GM12878 (cell line): ENCODE measurements at regions of chr12 and their contacts with region 1.

Region 1: GRCh38 chr12:46661110-46661845 is 164.5 kb downstream of the SLC38A4 start:
- DNase-seq: peak; percentile 48
- ATAC-seq: peak; percentile 94
- H3K4me3 ChIP-seq: no peak overlapping the region
- H3K27ac ChIP-seq: no peak overlapping the region
- H3K4me1 ChIP-seq: peaks cover 7% of the 10 kb centered on the region
- H3K27me3 ChIP-seq: no peaks in the 10 kb centered on the region
- CTCF ChIP-seq: peak; percentile 77 to 85 (median 83)
- EP300 ChIP-seq: no peak
- POLR2A ChIP-seq: no peak
- RAD21 ChIP-seq: peak; percentile 93

Region 2: DNA sequence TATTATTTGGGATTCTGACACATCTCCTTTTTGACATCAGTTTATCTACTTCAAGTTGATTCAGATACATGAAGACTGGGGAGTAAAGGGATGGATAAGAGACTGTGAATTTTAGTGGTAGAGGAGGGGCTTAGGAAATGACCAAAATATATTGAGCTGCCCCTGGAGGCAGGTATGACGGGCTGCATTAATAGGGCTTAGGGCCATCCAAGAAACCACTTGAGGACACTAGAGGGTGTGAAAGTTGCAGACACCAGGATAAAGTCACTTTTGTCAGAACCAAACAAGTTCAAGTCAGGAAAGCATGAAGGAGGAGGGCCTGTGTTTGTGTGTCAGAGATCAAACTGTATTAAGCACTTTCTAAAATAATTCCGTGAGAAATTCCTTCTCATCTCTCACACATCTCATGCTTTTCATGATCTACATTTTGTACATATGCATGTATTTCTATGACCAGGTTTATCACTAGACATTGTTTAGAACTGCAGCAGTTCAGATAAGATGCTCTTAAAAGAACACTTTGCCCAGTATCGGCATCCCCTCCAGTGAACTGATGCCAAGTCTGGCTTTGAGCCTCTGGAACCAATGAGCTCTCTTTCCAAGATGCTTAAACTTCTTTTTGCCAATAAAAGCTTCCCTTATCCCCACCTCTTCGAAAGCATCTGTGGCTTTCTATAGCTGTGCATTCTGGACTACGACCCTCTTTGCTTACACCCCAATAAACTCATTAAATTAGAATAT is 529.4 kb before region 1 on chr12:
- CTCF ChIA-PET with region 1: interaction called, 3 read pairs
- POLR2A ChIA-PET with region 1: no interaction called
- RAD21 ChIA-PET with region 1: no interaction called
- SMC1A ChIA-PET with region 1: no interaction called
- in situ Hi-C with region 1: loop called (anchors 25 kb)
- intact Hi-C with region 1: loop called (anchors 5 kb)
- DNase-seq: no peak
- ATAC-seq: peak; percentile 75
- H3K4me3 ChIP-seq: no peak overlapping the region
- H3K27ac ChIP-seq: no peak overlapping the region
- H3K4me1 ChIP-seq: no peaks in the 10 kb centered on the region
- H3K27me3 ChIP-seq: no peaks in the 10 kb centered on the region; a peak in 1 of 4 replicates
- CTCF ChIP-seq: peak in 2 of 3 experiments; percentile 29 to 41; a peak in 2 of 6 replicates
- EP300 ChIP-seq: no peak
- POLR2A ChIP-seq: no peak
- RAD21 ChIP-seq: peak; percentile 52; the same call in 1 of the 2 replicates

Region 3: DNA sequence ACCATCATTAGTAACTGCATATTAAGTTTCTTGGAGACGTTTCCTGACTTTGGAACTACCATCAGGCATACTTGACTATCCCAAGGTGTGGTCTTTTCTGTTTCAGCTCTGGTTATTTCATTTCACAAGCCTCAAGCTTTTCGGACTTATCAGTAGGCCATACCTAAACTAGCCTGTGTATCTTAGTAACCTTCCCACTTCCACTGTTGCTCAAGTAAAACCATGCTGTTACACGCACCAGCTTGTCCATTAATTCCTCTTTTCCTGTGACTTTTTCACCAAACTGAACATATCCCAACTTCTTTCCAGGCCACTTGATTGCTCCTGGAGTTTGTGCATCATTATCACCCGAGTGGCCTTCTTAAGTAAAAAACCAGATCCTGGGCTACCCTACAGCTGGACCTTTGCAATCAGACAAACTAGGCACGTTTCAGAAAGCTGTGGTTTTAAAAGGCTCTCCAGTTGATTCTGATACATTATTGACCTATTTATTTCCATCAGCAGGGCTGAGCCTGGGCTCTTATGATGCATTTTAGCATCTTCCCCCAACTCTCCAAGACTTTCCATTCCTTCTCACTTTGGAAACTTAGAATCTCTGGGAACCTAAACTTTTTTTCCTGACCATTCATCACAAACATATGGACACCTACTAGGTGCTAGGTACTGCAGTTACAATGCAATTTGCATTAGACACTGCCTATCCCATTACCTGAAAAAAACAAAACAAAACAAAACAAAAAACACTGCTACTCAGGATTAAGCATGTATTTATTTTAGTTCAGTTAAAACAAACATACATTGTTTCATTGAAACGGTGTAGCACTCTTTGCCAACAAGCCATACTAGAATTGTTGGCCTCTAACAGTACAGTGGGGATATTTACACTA is 303.6 kb before region 1 on chr12:
- CTCF ChIA-PET with region 1: interaction called, 4 read pairs
- POLR2A ChIA-PET with region 1: interaction called, 3 read pairs
- RAD21 ChIA-PET with region 1: interaction called, 13 read pairs
- SMC1A ChIA-PET with region 1: interaction called, 10 read pairs
- in situ Hi-C with region 1: loop called (anchors 5 kb)
- intact Hi-C with region 1: no loop called
- DNase-seq: no peak
- ATAC-seq: peak; percentile 12; the same call in 2 of the 3 replicates
- H3K4me3 ChIP-seq: no peak overlapping the region
- H3K27ac ChIP-seq: no peak overlapping the region
- H3K4me1 ChIP-seq: peaks cover 13% of the 10 kb centered on the region
- H3K27me3 ChIP-seq: no peaks in the 10 kb centered on the region
- CTCF ChIP-seq: no peak
- EP300 ChIP-seq: no peak
- POLR2A ChIP-seq: peak; percentile 56
- RAD21 ChIP-seq: no peak

Region 4: DNA sequence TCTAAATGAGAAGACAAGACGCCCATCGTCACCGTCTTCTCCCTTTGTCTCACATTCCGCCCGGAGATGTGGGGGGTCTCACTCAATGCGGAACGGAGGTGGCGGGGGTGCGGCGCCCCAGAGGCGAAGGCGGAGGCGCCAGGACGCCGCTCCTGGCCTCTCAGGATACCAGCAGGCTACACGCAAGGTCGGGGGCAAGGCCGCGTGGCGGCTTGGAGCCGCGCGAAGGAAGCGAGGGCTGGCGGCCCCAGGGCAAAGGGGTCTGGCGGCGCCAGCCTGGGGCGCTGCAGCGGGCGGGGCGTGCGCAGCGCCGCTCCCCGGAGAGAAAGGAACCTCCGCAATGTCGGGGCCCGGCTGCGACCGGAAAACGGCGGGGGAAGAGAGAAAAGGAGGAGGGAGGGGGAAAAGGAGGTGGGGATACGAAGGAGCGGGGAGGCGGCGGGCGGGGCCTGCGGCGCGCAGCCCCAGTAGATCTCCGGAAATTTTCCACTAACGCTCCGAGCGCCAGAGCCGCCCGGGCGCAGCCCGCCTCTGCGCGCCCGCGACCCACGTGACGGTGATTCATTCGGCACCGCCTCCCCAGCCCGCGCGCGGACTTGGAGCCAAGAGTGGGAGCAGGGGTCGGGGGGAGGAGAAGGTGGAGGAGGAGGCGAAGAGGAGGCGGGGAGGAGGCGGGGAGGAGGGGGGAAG is 278.2 kb before region 1 on chr12:
- CTCF ChIA-PET with region 1: interaction called, 5 read pairs
- POLR2A ChIA-PET with region 1: interaction called, 4 read pairs
- RAD21 ChIA-PET with region 1: interaction called, 11 read pairs
- SMC1A ChIA-PET with region 1: interaction called, 9 read pairs
- in situ Hi-C with region 1: no loop called
- intact Hi-C with region 1: no loop called
- DNase-seq: peak; percentile 81
- ATAC-seq: peak; percentile 80
- H3K4me3 ChIP-seq: peak overlapping the region; percentile 80
- H3K27ac ChIP-seq: peak overlapping the region; percentile 89
- H3K4me1 ChIP-seq: peaks cover 23% of the 10 kb centered on the region
- H3K27me3 ChIP-seq: no peaks in the 10 kb centered on the region
- CTCF ChIP-seq: peak; percentile 19 to 39 (median 34); a peak in 4 of 6 replicates
- EP300 ChIP-seq: no peak; a peak in 2 of 4 replicates
- POLR2A ChIP-seq: peak; percentile 81
- RAD21 ChIP-seq: peak; percentile 39

Region 5: DNA sequence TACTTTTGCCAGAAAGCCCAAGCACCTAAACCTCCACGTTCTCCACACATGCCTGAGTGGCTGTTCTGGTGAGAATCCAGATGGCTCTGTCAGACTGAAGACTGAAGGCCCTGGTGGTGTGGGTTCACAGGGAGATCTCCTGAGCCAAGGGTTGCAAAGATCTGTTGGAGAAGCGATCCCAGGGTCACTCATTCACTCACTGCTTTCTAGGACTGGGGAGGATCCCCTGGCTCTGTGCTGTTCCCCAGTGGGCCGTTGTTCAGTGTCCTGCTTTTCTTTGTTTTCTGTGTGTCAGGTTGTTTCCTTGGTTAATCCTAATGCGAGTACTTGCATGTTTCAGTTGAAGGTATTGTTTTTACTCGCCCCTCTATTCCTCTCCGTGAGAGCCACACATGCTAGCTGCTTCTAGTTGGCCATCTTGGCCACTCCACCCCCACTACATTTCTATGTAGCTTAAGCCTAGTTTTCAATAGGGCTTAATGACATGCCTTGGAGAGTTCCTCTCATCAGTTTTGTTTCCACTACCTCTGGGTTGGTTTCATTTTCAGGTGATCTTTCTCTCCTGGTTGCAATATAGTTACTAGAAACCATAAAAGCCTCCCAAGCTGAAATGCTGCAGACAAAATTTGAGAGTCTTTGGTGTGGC is 144.2 kb before region 1 on chr12:
- CTCF ChIA-PET with region 1: interaction called, 10 read pairs
- POLR2A ChIA-PET with region 1: no interaction called
- RAD21 ChIA-PET with region 1: interaction called, 7 read pairs
- SMC1A ChIA-PET with region 1: interaction called, 9 read pairs
- in situ Hi-C with region 1: no loop called
- intact Hi-C with region 1: loop called (anchors 2 kb)
- DNase-seq: peak; percentile 85
- ATAC-seq: peak; percentile 96
- H3K4me3 ChIP-seq: peak overlapping the region; percentile 18; the same call in 1 of the 2 replicates
- H3K27ac ChIP-seq: peak overlapping the region; percentile 97
- H3K4me1 ChIP-seq: peaks cover 30% of the 10 kb centered on the region
- H3K27me3 ChIP-seq: no peaks in the 10 kb centered on the region
- CTCF ChIP-seq: no peak
- EP300 ChIP-seq: peak in 1 of 2 experiments; percentile 48; a peak in 1 of 4 replicates
- POLR2A ChIP-seq: no peak
- RAD21 ChIP-seq: peak; percentile 24

Region 6: DNA sequence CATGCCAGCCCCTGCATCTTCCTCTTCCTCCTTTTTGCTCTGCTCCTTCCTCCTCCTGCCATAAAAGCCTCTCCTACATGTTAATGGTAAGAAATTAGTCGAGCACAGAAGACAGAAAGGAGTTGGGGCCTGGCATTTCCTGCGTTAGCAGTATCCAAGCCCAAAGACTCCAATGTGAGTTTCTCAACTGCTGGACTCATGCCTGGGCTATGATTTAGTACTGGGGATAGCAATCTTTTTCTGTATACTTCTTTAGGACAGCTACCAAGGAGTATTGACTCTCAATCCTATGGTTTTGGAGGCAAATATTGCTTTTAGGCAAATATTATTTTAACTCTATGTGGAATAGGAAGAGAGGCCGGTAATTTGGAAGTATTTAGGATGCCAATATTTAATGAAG is 182.5 kb after region 1 on chr12:
- CTCF ChIA-PET with region 1: no interaction called
- POLR2A ChIA-PET with region 1: no interaction called
- RAD21 ChIA-PET with region 1: no interaction called
- SMC1A ChIA-PET with region 1: no interaction called
- in situ Hi-C with region 1: no loop called
- intact Hi-C with region 1: no loop called
- DNase-seq: no peak
- ATAC-seq: no peak
- H3K4me3 ChIP-seq: no peak overlapping the region
- H3K27ac ChIP-seq: no peak overlapping the region
- H3K4me1 ChIP-seq: no peaks in the 10 kb centered on the region
- H3K27me3 ChIP-seq: no peaks in the 10 kb centered on the region
- CTCF ChIP-seq: no peak
- EP300 ChIP-seq: no peak
- POLR2A ChIP-seq: no peak
- RAD21 ChIP-seq: no peak